CD4-positive, alpha-beta T cell (primary cell): ENCODE measurements at regions of chr2 and their contacts with region 1.

Region 1: GRCh38 chr2:24164125-24164973 is 10.5 kb upstream of the FAM228A start:
- DNase-seq: peak in 12 of 14 experiments; percentile 2 to 62 (median 18)
- ATAC-seq: peak; percentile 66
- H3K4me3 ChIP-seq: no peak overlapping the region
- H3K4me3 Mint-ChIP-seq: no peak overlapping the region
- H3K27ac ChIP-seq: no peak overlapping the region
- H3K27ac Mint-ChIP-seq: no peak overlapping the region
- H3K4me1 ChIP-seq: no peaks in the 10 kb centered on the region
- H3K4me1 Mint-ChIP-seq: no peaks in the 10 kb centered on the region
- H3K27me3 ChIP-seq: no peaks in the 10 kb centered on the region
- H3K27me3 Mint-ChIP-seq: no peaks in the 10 kb centered on the region
- CTCF ChIP-seq: peak; percentile 62

Region 2: GRCh38 chr2:23824777-23825212 is 339.6 kb before region 1 on chr2:
- CTCF ChIA-PET with region 1: interaction called, 4 read pairs
- POLR2A ChIA-PET with region 1: no interaction called
- intact Hi-C with region 1: loop called (anchors 1 to 2 kb)
- DNase-seq: peak in 6 of 14 experiments; percentile 4 to 72 (median 51)
- ATAC-seq: peak; percentile 70
- H3K4me3 ChIP-seq: no peak overlapping the region
- H3K4me3 Mint-ChIP-seq: no peak overlapping the region
- H3K27ac ChIP-seq: no peak overlapping the region
- H3K27ac Mint-ChIP-seq: no peak overlapping the region
- H3K4me1 ChIP-seq: no peaks in the 10 kb centered on the region
- H3K4me1 Mint-ChIP-seq: no peaks in the 10 kb centered on the region
- H3K27me3 ChIP-seq: no peaks in the 10 kb centered on the region
- H3K27me3 Mint-ChIP-seq: no peaks in the 10 kb centered on the region
- CTCF ChIP-seq: peak; percentile 79

Region 3: DNA sequence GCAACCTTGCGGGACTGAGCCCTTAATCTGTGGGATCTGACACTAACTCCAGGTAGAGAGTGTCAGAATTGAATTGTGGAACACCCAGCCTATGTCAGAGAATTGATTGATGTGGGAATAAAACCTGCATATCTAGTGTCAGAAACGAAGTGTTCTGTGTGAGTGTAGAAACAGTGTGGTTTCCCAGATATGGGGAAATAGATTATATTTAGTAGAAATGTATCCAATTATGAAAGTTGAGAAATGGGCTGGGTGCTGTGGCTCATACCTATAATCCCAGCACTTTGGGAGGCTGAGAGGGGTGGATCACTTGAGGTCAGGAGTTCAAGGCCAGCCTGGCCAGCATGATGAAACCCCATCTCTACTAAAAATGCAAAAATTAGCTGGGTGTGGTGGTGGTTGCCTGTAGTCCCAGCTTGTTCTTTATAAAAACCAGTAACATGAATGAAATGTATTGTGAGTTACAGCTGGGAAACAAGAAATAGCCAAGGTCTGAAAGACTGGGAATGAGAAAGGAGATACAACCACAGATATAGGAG is 75.5 kb before region 1 on chr2:
- CTCF ChIA-PET with region 1: no interaction called
- POLR2A ChIA-PET with region 1: no interaction called
- intact Hi-C with region 1: no loop called
- DNase-seq: no peak
- ATAC-seq: no peak
- H3K4me3 ChIP-seq: no peak overlapping the region
- H3K4me3 Mint-ChIP-seq: no peak overlapping the region
- H3K27ac ChIP-seq: no peak overlapping the region
- H3K27ac Mint-ChIP-seq: no peak overlapping the region
- H3K4me1 ChIP-seq: peaks cover 13% of the 10 kb centered on the region
- H3K4me1 Mint-ChIP-seq: peaks cover 13% of the 10 kb centered on the region
- H3K27me3 ChIP-seq: no peaks in the 10 kb centered on the region
- H3K27me3 Mint-ChIP-seq: no peaks in the 10 kb centered on the region
- CTCF ChIP-seq: no peak